ENCODE measurements at regions of chr22 and their contacts with region 1.

Region 1: GRCh38 chr22:39055658-39056057 is 15.0 kb downstream of the APOBEC3F start:
- DNase-seq: no peak
- H3K4me3 ChIP-seq: no peak overlapping the region
- H3K27ac ChIP-seq: no peak overlapping the region
- H3K4me1 ChIP-seq: peaks cover 21% of the 10 kb centered on the region
- H3K27me3 ChIP-seq: no peaks in the 10 kb centered on the region
- CTCF ChIP-seq: no peak

Region 2: DNA sequence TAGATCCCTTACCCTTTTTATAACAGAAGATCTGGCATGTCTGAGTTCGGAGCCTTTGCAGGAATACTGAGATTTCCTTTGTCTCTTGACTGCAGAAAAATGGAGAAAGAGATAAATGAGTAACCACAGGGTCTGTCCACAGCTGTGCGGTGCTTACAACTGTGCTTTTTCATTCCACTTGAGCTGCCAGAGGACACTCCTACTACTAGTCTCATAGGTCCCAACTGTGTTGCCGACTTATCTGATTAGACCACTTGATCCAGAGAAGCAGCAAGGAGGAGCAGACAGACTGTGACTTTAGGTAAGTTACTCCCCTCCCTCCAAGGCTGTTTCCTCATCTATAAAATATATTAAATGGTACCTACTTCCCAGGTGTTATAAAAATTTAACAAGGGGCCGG is 416.9 kb before region 1 on chr22:
- CTCF ChIA-PET with region 1: no interaction called
- POLR2A ChIA-PET with region 1: no interaction called
- intact Hi-C with region 1: no loop called
- DNase-seq: no peak
- H3K4me3 ChIP-seq: no peak overlapping the region
- H3K27ac ChIP-seq: no peak overlapping the region
- H3K4me1 ChIP-seq: no peaks in the 10 kb centered on the region
- H3K27me3 ChIP-seq: no peaks in the 10 kb centered on the region
- CTCF ChIP-seq: no peak

Region 3: GRCh38 chr22:38996105-38996504 is 59.6 kb before region 1 on chr22:
- CTCF ChIA-PET with region 1: no interaction called
- POLR2A ChIA-PET with region 1: no interaction called
- intact Hi-C with region 1: no loop called
- DNase-seq: no peak
- H3K4me3 ChIP-seq: no peak overlapping the region
- H3K27ac ChIP-seq: no peak overlapping the region
- H3K4me1 ChIP-seq: no peaks in the 10 kb centered on the region
- H3K27me3 ChIP-seq: no peaks in the 10 kb centered on the region
- CTCF ChIP-seq: no peak

Region 4: GRCh38 chr22:39021552-39022250 is 34.0 kb before region 1 on chr22:
- CTCF ChIA-PET with region 1: interaction called, 11 read pairs
- POLR2A ChIA-PET with region 1: no interaction called
- intact Hi-C with region 1: no loop called
- DNase-seq: no peak
- H3K4me3 ChIP-seq: no peak overlapping the region
- H3K27ac ChIP-seq: no peak overlapping the region
- H3K4me1 ChIP-seq: peaks cover 8% of the 10 kb centered on the region
- H3K27me3 ChIP-seq: no peaks in the 10 kb centered on the region
- CTCF ChIP-seq: no peak

Region 5: GRCh38 chr22:39135090-39135896 is 79.6 kb after region 1 on chr22:
- CTCF ChIA-PET with region 1: no interaction called
- POLR2A ChIA-PET with region 1: no interaction called
- intact Hi-C with region 1: no loop called
- DNase-seq: peak in 1 of 2 experiments; percentile 71
- H3K4me3 ChIP-seq: no peak overlapping the region
- H3K27ac ChIP-seq: no peak overlapping the region
- H3K4me1 ChIP-seq: peaks cover 7% of the 10 kb centered on the region
- H3K27me3 ChIP-seq: no peaks in the 10 kb centered on the region
- CTCF ChIP-seq: peak; percentile 78

Region 6: GRCh38 chr22:40094485-40094884 is 1038.8 kb after region 1 on chr22:
- CTCF ChIA-PET with region 1: no interaction called
- POLR2A ChIA-PET with region 1: interaction called, 23 read pairs
- intact Hi-C with region 1: no loop called
- DNase-seq: no peak
- H3K4me3 ChIP-seq: no peak overlapping the region
- H3K27ac ChIP-seq: no peak overlapping the region
- H3K4me1 ChIP-seq: no peaks in the 10 kb centered on the region
- H3K27me3 ChIP-seq: no peaks in the 10 kb centered on the region
- CTCF ChIP-seq: no peak

Measured in PC-9 (cell line).